Gastrocnemius medialis (tissue), 4 donors: ENCODE measurements at regions of chr15 and their contacts with region 1.

Region 1: DNA sequence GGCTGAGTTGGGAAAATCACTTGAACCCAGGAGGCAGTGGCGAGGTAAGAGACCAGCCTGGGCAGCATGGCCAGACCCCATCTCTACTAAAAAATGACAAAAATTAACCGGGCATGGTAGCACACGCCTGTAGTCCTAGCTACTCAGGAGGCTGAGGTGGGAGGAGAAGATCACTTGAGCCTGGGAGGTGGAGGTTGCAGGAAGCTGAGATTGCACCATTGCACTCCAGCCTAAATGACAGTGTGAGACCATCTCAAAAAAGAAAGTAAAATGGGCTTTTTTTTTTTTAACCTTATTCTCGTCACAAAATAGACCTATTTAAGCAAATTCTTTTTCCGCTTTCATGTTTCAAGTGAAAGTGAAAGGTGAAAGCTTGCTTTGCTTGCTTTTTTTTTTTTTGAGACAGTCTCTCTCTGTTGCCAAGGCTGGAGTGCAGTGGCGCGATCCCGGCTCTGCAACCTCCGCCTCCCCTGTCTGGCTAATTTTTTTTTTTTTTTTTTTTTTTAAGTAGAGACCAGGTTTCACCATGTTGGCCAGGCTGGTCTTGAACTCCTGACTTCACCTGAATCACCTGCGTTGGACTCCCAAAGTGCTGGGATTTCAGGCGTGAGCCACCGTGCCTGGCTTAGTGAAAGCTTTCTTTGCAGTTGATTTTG is 3.6 kb downstream of the PDIA3 start:
- DNase-seq: no peak
- ATAC-seq: no peak
- H3K4me3 ChIP-seq: peak overlapping the region in 1 of 4 donors; percentile 18
- H3K27ac ChIP-seq: peak overlapping the region in 3 of 4 donors; percentile 3 to 34 (median 27)
- H3K4me1 ChIP-seq: peaks cover 20 to 26% of the 10 kb centered on the region in 2 donors
- H3K27me3 ChIP-seq: no peaks in the 10 kb centered on the region
- CTCF ChIP-seq: no peak
- POLR2A ChIP-seq: no peak

Region 2: GRCh38 chr15:43769584-43770228 is 19.9 kb after region 1 on chr15:
- in situ Hi-C with region 1: no loop called
- intact Hi-C with region 1: loop called (anchors 1 kb)
- DNase-seq: no peak
- ATAC-seq: peak in 1 of 2 donors; percentile 37
- H3K4me3 ChIP-seq: no peak overlapping the region
- H3K27ac ChIP-seq: no peak overlapping the region
- H3K4me1 ChIP-seq: no peaks in the 10 kb centered on the region
- H3K27me3 ChIP-seq: no peaks in the 10 kb centered on the region
- CTCF ChIP-seq: peak; percentile 24 to 71 (median 49)
- POLR2A ChIP-seq: no peak